AG04450 (cell line): ENCODE measurements at regions of chr10 and their contacts with region 1.

Region 1: DNA sequence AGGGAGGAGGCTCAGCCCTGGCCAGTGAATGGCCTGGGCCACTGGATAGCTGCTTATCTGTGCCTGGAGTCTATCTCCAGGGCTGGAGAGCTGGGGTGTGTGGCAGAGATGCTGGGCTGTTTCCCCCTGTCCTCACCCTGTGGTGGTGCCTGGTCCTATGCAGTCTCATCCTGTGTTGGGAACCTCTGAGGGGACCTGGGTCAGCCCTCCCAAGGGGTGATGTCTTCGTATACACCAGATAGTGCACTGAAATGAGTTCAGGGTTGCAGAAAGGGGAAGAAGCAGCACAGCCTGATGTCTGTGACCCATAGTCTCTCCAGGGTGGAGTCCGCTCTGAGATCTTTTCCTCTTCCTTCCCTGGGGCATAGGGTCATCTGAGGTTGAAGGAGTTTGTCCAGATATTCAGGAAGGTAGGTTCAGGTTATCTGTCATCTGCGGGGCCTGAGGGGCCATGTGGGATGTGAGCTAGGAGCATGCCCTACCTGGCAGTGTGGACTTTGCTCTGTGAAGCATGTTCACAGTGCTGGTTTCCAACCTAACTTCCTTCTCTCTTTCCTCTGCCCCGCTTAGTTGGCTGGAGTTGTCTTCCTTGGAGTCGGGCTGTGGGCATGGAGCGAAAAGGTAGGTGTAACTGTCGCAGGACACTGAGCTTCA is 33.4 kb upstream of the SH2D4B start:
- DNase-seq: no peak
- H3K4me3 ChIP-seq: no peak overlapping the region
- H3K27ac ChIP-seq: peak overlapping the region; percentile 42
- H3K27me3 ChIP-seq: no peaks in the 10 kb centered on the region
- CTCF ChIP-seq: no peak

Region 2: DNA sequence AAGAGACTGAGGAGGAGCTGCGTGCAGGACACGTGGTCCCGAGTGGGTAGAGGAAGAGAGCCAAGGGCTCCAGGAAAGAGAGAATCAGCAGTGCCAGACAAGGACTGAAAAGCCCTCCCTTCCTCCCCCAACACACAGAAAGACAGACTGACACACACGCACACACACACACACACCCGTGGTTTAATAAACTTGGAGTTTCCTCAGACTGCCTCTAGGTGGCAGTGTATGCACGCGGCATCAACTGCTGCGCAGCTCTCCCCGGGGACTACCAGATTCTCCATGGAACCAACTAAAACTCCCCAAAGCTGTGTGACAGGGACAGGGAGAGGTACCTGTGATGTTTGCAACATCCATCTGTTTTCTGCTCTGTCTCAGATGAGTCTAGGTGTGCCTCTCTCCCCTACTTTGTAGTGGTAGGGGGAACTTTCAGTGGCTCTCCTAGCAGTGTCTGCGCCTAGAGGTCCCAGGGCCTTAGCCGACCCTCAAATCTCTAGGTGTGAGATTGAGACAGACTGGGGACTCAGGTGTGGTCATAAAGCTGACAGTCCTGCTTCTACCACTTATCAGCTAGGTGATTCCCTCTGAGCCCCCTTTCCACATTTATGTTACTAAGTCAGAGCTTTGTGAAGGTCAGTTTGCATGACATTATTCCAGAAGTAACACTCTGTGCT is 59.5 kb before region 1 on chr10:
- CTCF ChIA-PET with region 1: interaction called, 128 read pairs
- POLR2A ChIA-PET with region 1: interaction called, 3 read pairs
- DNase-seq: no peak
- H3K4me3 ChIP-seq: no peak overlapping the region
- H3K27ac ChIP-seq: no peak overlapping the region
- H3K27me3 ChIP-seq: no peaks in the 10 kb centered on the region
- CTCF ChIP-seq: peak; percentile 92

Region 3: DNA sequence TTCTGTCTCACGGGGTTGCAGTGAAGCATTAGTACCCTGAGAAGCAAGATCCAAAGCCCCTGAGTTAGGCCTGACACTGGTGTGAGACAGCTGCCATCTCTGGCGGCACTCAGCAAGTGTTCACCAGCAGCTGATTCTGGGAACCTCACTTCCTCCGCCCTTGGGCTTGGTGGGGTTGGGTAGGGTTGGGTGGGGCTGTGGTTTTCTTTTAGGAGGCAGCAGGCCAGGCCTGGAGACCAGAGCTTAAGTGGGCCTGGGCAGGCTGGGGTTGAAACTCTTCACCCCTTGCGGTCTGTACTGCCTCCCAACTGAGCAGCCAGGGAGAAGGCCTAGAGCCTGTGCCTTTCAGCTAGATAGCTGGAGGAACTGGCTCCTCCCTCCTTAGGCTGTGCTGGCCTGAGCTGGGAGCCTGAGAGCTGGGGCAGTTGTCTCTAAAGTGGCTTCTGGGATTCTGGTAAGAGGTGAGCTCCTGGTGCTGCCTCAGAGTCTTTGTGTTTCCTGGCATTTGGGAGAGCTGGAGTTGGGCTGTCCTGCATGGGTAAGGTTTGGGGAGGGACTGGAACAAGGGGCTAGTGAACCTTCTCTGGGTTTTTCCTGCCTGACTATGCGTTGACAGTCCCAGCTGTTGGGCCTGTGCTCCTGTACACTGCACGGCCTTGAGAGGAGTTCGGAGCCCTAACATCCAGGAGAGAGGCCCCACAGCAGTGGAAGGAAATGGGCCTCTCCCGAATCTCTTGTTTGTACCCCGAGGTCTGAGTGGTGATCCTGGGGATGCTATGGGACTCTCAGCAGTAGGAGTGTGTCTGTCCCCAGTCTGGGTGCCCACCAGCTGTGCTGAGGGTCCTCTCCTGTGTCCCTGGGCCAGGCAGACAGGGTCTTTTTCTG is 45.0 kb before region 1 on chr10:
- CTCF ChIA-PET with region 1: interaction called, 90 read pairs
- POLR2A ChIA-PET with region 1: interaction called, 6 read pairs
- DNase-seq: no peak
- H3K4me3 ChIP-seq: no peak overlapping the region
- H3K27ac ChIP-seq: peak overlapping the region; percentile 47
- H3K27me3 ChIP-seq: no peaks in the 10 kb centered on the region
- CTCF ChIP-seq: no peak

Region 4: GRCh38 chr10:80477813-80478212 is 26.5 kb before region 1 on chr10:
- CTCF ChIA-PET with region 1: interaction called, 27 read pairs
- POLR2A ChIA-PET with region 1: no interaction called
- DNase-seq: no peak
- H3K4me3 ChIP-seq: no peak overlapping the region
- H3K27ac ChIP-seq: no peak overlapping the region
- H3K27me3 ChIP-seq: no peaks in the 10 kb centered on the region
- CTCF ChIP-seq: no peak

Region 5: GRCh38 chr10:80493522-80494051 is 10.7 kb before region 1 on chr10:
- CTCF ChIA-PET with region 1: interaction called, 31 read pairs
- POLR2A ChIA-PET with region 1: interaction called, 8 read pairs
- DNase-seq: no peak
- H3K4me3 ChIP-seq: no peak overlapping the region
- H3K27ac ChIP-seq: no peak overlapping the region
- H3K27me3 ChIP-seq: no peaks in the 10 kb centered on the region
- CTCF ChIP-seq: no peak